WTC11 (cell line): ENCODE measurements at regions of chr19 and their contacts with region 1.

Region 1: DNA sequence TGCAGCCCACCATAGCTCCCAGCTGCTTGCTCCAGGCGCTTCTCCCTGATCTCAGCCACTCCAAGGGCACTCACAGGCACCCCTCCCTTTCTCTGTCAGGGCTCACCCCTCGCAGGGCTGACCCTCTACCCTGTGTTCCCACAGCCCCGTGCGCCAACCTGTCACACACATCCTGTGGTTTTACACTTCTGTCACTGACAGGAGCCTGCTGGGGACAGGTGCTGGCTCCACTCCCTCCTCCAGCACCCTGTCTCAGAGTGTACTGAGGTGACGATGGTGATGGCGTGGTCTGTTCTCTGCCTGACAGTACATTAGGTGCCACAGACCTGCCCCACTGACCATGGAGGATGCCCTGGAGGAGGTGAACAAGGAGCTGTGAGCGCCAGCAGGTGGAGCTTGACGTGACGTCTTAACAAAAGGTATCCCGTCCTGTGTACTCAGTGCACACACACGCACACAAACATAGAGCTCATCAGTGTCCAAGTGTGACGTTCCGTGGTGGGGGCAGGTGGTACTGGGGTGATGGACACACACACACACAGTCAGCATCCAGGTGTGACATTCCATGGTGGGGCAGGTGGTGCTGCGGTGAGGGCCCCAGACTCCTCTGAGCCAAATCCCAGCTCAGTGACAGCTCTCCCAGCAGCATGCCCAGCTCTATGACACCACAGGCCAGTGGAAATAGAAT is 20.9 kb downstream of the C19orf44 start:
- DNase-seq: no peak
- ATAC-seq: no peak
- H3K4me3 Mint-ChIP-seq: no peak overlapping the region
- H3K27ac Mint-ChIP-seq: peak overlapping the region; percentile 53; the same call in 1 of the 2 replicates
- H3K4me1 Mint-ChIP-seq: no peaks in the 10 kb centered on the region
- H3K27me3 Mint-ChIP-seq: no peaks in the 10 kb centered on the region
- CTCF ChIP-seq: no peak

Region 2: GRCh38 chr19:16495982-16496612 is 21.0 kb before region 1 on chr19 and contains the starts of genes C19orf44 and CALR3:
- CTCF ChIA-PET with region 1: interaction called, 10 read pairs
- POLR2A ChIA-PET with region 1: no interaction called
- DNase-seq: peak; percentile 98
- ATAC-seq: peak; percentile 98
- H3K4me3 Mint-ChIP-seq: peak within 1 kb of the TSS; percentile 91
- H3K27ac Mint-ChIP-seq: peak within 1 kb of the TSS; percentile 63; the same call in 1 of the 2 replicates
- H3K4me1 Mint-ChIP-seq: peaks cover 11% of the 10 kb centered on the region
- H3K27me3 Mint-ChIP-seq: no peaks in the 10 kb centered on the region
- CTCF ChIP-seq: no peak
- total RNA-seq, gene C19orf44: 3.4 to 4.8 TPM (median 4.1 TPM) in 3 replicates
- total RNA-seq, gene CALR3: 0.21 to 0.87 TPM (median 0.50 TPM) in 3 replicates

Region 3: GRCh38 chr19:16829010-16829821 is 312.1 kb after region 1 on chr19 and contains the start of gene SIN3B:
- CTCF ChIA-PET with region 1: no interaction called
- POLR2A ChIA-PET with region 1: interaction called, 13 read pairs
- DNase-seq: peak; percentile 85
- ATAC-seq: peak; percentile 52
- H3K4me3 Mint-ChIP-seq: peak within 1 kb of the TSS; percentile 86
- H3K27ac Mint-ChIP-seq: 0 out of 2 replicates have a peak within 1 kb of the TSS, but pooled peaks have one; percentile 86
- H3K4me1 Mint-ChIP-seq: peaks cover 43% of the 10 kb centered on the region
- H3K27me3 Mint-ChIP-seq: no peaks in the 10 kb centered on the region; the same call in 1 of the 2 replicates
- CTCF ChIP-seq: no peak
- total RNA-seq, gene SIN3B: 76.8 to 87.7 TPM (median 80.0 TPM) in 3 replicates